ENCODE measurements at regions of chr2 and their contacts with region 1.

Region 1: DNA sequence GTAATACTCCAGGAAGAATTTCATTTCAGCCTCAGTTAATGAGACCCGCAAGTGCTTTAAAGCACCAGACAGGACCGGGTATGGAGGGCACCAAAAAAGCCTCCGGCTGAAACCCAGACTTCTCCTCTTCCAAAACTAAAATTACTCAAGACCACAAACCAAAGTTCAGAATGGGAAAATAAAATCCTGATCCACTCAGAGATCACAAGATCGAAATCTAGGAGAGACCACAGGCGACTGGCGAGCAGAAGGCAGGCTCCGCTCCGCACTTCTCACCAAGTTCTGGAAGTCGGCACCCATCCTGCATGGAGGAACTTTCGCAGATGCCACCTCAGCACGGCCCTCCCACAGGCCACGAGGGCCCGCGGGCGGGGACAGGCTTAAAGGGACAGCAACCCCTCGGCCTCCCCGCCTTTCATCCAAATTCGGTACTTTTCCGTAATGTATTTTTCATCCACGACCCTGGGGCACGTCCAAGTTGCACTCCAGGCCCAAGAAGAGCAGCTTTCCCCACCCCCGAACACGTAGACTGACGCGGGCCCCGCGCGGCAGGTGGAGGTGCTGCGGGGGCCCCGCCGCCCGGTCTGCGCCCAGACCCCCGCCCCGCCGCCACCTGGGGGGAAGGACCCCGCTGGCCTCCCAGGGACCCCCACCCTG is 43.7 kb downstream of the HDLBP start:
- DNase-seq: peak; percentile 26 to 78 (median 51)
- ATAC-seq: peak; percentile 73
- H3K4me3 ChIP-seq: peak overlapping the region; percentile 72
- H3K4me3 Mint-ChIP-seq: peak overlapping the region; percentile 96
- H3K27ac ChIP-seq: no peak overlapping the region
- H3K27ac Mint-ChIP-seq: peak overlapping the region; percentile 84
- H3K4me1 ChIP-seq: peaks cover 36% of the 10 kb centered on the region
- H3K4me1 Mint-ChIP-seq: peaks cover 60% of the 10 kb centered on the region
- H3K27me3 ChIP-seq: no peaks in the 10 kb centered on the region
- H3K27me3 Mint-ChIP-seq: no peaks in the 10 kb centered on the region
- CTCF ChIP-seq: no peak

Region 2: GRCh38 chr2:241123816-241124536 is 147.8 kb before region 1 on chr2:
- CTCF ChIA-PET with region 1: no interaction called
- POLR2A ChIA-PET with region 1: no interaction called
- intact Hi-C with region 1: no loop called
- DNase-seq: peak in 12 of 14 experiments; percentile 32 to 76 (median 53)
- ATAC-seq: peak; percentile 95
- H3K4me3 ChIP-seq: peak overlapping the region; percentile 2
- H3K4me3 Mint-ChIP-seq: peak overlapping the region; percentile 30
- H3K27ac ChIP-seq: peak overlapping the region in 1 of 2 donors; percentile 55
- H3K27ac Mint-ChIP-seq: peak overlapping the region; percentile 79
- H3K4me1 ChIP-seq: peaks cover 47% of the 10 kb centered on the region
- H3K4me1 Mint-ChIP-seq: peaks cover 23% of the 10 kb centered on the region
- H3K27me3 ChIP-seq: no peaks in the 10 kb centered on the region
- H3K27me3 Mint-ChIP-seq: no peaks in the 10 kb centered on the region
- CTCF ChIP-seq: no peak

Region 3: GRCh38 chr2:241300000-241300399 is 28.2 kb after region 1 on chr2:
- CTCF ChIA-PET with region 1: no interaction called
- POLR2A ChIA-PET with region 1: no interaction called
- intact Hi-C with region 1: loop called in 1 of 2 experiments (anchors 2 kb)
- DNase-seq: peak in 13 of 14 experiments; percentile 15 to 81 (median 48)
- ATAC-seq: peak; percentile 80
- H3K4me3 ChIP-seq: no peak overlapping the region
- H3K4me3 Mint-ChIP-seq: peak overlapping the region; percentile 44
- H3K27ac ChIP-seq: no peak overlapping the region
- H3K27ac Mint-ChIP-seq: peak overlapping the region; percentile 76
- H3K4me1 ChIP-seq: peaks cover 49% of the 10 kb centered on the region
- H3K4me1 Mint-ChIP-seq: peaks cover 77% of the 10 kb centered on the region
- H3K27me3 ChIP-seq: no peaks in the 10 kb centered on the region
- H3K27me3 Mint-ChIP-seq: no peaks in the 10 kb centered on the region
- CTCF ChIP-seq: peak; percentile 23

Region 4: DNA sequence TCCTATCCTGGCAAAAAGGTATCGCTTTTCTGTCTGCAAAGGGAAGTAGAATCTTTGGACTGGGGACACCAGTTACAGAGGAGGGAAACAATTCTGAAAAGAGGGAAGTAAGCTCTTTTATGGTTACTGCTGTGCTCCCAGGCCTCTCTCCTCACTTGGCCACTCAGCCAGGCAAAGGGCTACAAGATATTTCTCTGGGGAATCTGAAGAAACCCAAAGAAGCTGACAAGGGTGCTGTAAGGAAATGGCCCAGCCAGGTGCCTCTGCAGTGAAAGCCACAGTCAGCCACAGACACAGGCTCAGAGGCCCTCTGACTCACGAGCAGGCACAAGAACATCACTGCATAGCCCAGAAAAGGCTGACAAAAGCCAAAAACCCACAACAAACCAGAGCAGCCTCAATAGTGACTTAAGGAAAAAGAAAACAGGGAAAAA is 37.9 kb after region 1 on chr2:
- CTCF ChIA-PET with region 1: no interaction called
- POLR2A ChIA-PET with region 1: interaction called, 14 read pairs
- intact Hi-C with region 1: loop called (anchors 2 to 5 kb)
- DNase-seq: peak; percentile 49 to 86 (median 68)
- ATAC-seq: peak; percentile 96
- H3K4me3 ChIP-seq: no peak overlapping the region
- H3K4me3 Mint-ChIP-seq: peak overlapping the region; percentile 68
- H3K27ac ChIP-seq: peak overlapping the region; percentile 31 to 42
- H3K27ac Mint-ChIP-seq: peak overlapping the region; percentile 87
- H3K4me1 ChIP-seq: peaks cover 69% of the 10 kb centered on the region
- H3K4me1 Mint-ChIP-seq: peaks cover 89% of the 10 kb centered on the region
- H3K27me3 ChIP-seq: no peaks in the 10 kb centered on the region
- H3K27me3 Mint-ChIP-seq: no peaks in the 10 kb centered on the region
- CTCF ChIP-seq: no peak

Measured in CD4-positive, alpha-beta T cell (primary cell).